Astrocyte of the cerebellum (primary cell): ENCODE measurements at regions of chr15 and their contacts with region 1.

Region 1: GRCh38 chr15:51470512-51470911 is 129.1 kb downstream of the GLDN start:
- DNase-seq: no peak
- H3K4me3 ChIP-seq: no peak overlapping the region
- CTCF ChIP-seq: no peak

Region 2: DNA sequence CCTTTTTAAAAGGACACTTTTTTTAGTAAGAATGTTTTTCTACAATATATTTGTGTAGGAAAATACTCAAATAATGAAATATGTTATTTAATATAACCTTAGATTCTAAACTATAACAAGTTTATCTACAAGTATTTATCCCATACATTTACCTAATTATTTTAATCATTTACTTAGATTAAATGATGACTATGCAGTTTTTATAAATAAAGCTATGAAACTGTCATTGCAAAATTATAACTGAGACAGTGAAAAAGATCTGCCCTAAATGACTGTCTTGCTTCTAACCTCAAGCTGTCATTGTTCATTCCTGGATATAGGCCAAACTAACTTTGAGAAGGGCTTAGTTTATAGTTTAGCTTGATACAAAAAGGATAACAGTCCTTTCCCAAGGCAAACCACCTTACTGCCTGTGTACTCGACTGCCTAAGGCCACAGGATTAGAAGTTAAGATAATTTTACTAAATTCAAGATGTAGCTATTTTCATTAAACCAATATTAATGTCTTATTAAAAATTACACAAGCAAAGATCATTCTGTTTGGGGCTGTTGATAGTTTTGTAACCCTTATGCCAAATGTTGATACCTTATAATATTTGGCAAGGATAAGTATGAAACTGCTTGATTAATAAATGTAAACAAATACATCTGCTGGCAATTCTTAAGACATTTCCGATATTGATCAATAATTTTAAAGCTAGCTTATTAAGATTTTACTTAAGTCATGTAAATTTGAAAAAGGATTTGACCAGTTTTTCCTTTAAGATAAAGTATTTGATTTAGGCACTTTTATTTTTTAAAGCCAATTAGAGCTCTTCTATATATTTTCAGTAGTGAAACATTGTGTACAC is 44.8 kb before region 1 on chr15:
- in situ Hi-C with region 1: no loop called
- DNase-seq: no peak
- H3K4me3 ChIP-seq: no peak overlapping the region
- CTCF ChIP-seq: no peak

Region 3: DNA sequence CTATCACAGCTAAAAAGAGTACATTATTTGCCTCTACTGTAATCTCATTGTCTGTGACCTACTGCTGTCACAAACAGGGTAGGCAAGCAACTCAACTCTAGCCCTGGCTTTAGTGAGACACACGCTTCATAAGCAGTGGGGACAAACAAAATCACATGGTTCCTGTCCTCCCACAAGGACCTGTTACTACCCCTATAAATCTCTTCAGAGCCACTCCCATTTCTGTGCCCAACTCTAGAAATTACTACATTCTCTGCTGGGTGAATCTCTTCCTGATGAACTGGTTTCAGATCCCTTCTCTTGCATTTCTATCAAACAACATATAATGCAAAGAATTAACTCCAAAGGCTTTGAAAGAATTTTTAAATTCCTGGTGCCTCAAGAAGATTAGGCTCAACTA is 34.7 kb after region 1 on chr15:
- in situ Hi-C with region 1: loop called (anchors 5 kb)
- DNase-seq: no peak
- H3K4me3 ChIP-seq: no peak overlapping the region
- CTCF ChIP-seq: no peak